Activated naive CD4-positive, alpha-beta T cell treated with anti-CD3 and anti-CD28 coated beads for 36 hours (primary cell): ENCODE measurements at regions of chr11 and their contacts with region 1.

Region 1: DNA sequence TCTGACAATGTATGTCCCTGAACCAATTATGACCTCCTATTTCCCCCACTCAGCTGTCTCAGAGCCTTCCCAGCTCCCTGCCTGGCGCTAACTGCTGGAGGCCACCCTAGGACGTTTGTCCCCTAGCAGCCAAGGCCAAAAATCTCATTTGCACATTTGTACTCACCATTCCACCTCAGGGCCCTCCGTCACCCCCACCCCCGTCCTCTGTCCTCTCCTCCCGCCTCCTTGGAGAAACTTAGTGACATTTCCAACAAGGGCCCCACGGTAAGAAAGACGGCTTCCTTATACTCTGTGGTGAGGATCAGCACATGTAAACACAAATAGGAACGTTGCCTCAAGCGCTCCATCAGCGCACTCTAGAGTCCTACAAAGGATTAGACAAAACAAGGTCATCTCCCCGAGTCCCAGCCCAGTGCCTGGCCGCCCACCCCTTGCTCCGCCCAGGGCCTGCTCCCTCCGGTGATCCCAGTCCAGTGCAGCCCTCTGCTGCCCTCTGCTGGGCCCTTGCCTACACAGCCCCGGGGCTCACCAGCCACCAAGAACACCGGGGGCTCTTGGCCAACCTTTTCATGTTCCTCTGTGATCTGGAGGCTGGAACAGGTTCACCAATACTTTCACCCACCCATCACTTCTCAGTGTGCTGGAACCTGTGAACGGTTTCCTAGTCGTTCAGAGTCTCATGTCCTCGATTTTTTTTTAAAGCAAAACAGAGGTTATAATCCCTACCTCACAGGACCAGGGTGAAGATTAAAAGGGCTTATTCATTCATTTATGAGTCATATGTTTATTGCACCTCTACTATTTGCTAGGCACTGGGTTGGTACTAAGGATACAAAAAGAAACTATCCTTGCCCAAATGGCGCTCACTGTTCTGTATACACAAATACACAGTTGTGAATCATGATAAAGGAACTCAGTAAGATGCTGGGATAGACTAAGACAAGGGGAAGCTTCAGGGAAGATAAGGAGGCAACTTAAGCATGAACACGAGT is 15.3 kb upstream of the CTR9 start:
- DNase-seq: peak; percentile 90
- H3K4me3 Mint-ChIP-seq: peak overlapping the region; percentile 54
- H3K27ac Mint-ChIP-seq: no peak overlapping the region
- H3K4me1 Mint-ChIP-seq: peaks cover 5% of the 10 kb centered on the region
- H3K27me3 Mint-ChIP-seq: peaks cover 6% of the 10 kb centered on the region

Region 2: GRCh38 chr11:10405855-10406592 is 329.8 kb before region 1 on chr11:
- CTCF ChIA-PET with region 1: interaction called, 5 read pairs
- intact Hi-C with region 1: loop called (anchors 1 kb)
- DNase-seq: peak; percentile 61
- H3K4me3 Mint-ChIP-seq: no peak overlapping the region
- H3K27ac Mint-ChIP-seq: no peak overlapping the region
- H3K4me1 Mint-ChIP-seq: peaks cover 15% of the 10 kb centered on the region
- H3K27me3 Mint-ChIP-seq: no peaks in the 10 kb centered on the region

Region 3: DNA sequence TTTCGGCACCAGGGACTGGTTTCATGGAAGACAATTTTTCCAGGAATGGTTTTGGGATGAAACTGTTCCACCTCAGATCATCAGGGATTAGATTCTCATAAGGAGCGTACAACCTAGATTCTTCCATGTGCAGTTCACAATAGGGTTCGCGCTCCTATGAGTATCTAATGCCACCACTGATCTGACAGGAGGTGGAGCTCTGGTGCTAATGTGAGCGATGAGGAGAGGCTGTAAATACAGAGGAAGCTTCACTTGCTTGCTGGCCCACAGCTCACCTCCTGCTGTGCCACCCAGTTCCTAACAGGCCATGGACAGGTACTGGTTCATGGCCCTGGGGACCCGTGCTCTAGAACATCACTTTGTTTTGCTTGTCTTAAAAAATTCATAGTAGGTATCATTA is 322.5 kb before region 1 on chr11:
- CTCF ChIA-PET with region 1: interaction called, 13 read pairs
- intact Hi-C with region 1: loop called (anchors 1 kb)
- DNase-seq: peak; percentile 71
- H3K4me3 Mint-ChIP-seq: no peak overlapping the region
- H3K27ac Mint-ChIP-seq: no peak overlapping the region
- H3K4me1 Mint-ChIP-seq: peaks cover 26% of the 10 kb centered on the region
- H3K27me3 Mint-ChIP-seq: no peaks in the 10 kb centered on the region

Region 4: DNA sequence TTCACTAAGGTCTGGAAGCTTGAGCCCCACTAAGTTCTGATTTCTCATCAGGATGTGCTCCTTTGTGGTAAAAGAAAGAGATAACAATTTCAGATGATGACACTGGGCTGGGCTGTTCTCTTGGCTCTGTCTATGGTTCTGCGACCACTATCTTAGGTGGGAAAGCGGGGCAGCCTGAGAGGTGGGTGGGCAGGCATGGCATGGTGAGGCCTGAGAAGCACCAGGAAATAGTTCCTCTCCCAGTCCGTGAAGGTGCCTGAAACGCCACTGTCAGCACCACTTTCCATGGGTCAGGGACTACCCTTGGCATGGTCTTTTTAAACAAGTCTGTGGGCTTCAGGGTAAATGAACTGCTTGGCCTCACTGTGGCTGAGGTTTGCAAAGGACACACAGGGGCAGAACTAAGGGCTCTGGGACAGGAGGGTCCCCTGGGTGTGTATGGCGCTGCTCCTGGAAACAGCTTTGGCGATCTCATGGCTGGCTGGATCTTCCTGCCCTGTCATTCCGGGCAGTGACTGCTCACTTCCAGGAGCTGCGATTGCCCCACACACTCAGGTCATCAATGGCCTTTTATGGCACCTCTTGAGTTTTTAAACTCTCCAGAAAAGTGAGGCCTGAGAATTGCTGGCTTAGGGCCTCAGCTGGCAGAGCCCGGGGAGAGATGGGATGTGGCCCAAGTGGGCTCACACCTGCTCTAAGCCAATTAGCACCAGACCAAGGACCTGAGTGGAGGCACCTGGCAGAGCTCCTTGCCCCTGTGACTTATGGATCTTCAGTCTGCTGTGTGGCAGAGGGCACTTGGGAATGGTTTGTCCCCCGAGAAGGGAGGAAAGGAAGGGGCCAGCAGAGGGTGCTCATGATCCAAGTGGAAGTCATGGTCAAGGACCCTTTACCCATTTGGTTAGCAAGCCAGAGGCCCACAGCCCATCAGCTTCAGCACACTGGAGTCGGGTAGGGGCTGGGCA is 111.7 kb before region 1 on chr11:
- CTCF ChIA-PET with region 1: no interaction called
- intact Hi-C with region 1: loop called (anchors 1 kb)
- DNase-seq: no peak
- H3K4me3 Mint-ChIP-seq: no peak overlapping the region
- H3K27ac Mint-ChIP-seq: peak overlapping the region; percentile 25
- H3K4me1 Mint-ChIP-seq: peaks cover 22% of the 10 kb centered on the region
- H3K27me3 Mint-ChIP-seq: no peaks in the 10 kb centered on the region